Astrocyte of the cerebellum (primary cell): ENCODE measurements at regions of chr5 and their contacts with region 1.

Region 1: GRCh38 chr5:166726406-166726805 is 1565.0 kb upstream of the WWC1 start:
- DNase-seq: no peak
- H3K4me3 ChIP-seq: no peak overlapping the region
- CTCF ChIP-seq: no peak

Region 2: GRCh38 chr5:166788050-166788650 is 61.7 kb after region 1 on chr5:
- in situ Hi-C with region 1: loop called (anchors 5 kb)
- DNase-seq: no peak
- H3K4me3 ChIP-seq: no peak overlapping the region
- CTCF ChIP-seq: no peak

Region 3: DNA sequence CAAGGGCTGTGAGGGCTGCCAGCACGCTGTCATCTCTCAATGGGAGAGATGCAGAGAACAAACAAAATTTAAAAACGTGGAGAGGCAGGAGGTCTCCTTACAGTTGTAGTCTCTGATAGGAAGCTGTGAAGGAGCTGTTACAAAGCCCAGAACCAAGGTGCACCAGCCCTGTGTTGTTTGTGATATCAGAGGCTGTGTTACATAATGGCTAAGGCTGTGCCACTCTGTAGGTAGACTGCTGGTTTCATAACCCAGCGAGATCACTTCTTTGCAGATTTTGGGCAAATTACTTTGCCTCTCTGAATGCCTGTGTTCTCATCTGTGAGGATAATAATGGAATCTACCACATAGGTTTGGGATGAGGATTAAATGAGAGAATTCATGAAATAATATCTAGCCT is 84.3 kb after region 1 on chr5:
- in situ Hi-C with region 1: no loop called
- DNase-seq: no peak
- H3K4me3 ChIP-seq: no peak overlapping the region
- CTCF ChIP-seq: no peak